Activated CD8-positive, alpha-beta T cell treated with anti-CD3 and anti-CD28 coated beads for 36 hours (primary cell): ENCODE measurements at regions of chr21 and their contacts with region 1.

Region 1: GRCh38 chr21:37711836-37712568 is 204.3 kb downstream of the KCNJ6 start:
- DNase-seq: peak; percentile 75
- ATAC-seq: peak; percentile 58
- H3K4me3 Mint-ChIP-seq: no peak overlapping the region
- H3K27ac Mint-ChIP-seq: no peak overlapping the region
- H3K4me1 Mint-ChIP-seq: no peaks in the 10 kb centered on the region
- H3K27me3 Mint-ChIP-seq: peaks cover 23% of the 10 kb centered on the region
- CTCF ChIP-seq: peak; percentile 75

Region 2: GRCh38 chr21:37700641-37701202 is 11.3 kb before region 1 on chr21:
- CTCF ChIA-PET with region 1: interaction called, 10 read pairs
- POLR2A ChIA-PET with region 1: no interaction called
- intact Hi-C with region 1: no loop called
- DNase-seq: peak; percentile 7
- ATAC-seq: peak; percentile 86
- H3K4me3 Mint-ChIP-seq: no peak overlapping the region
- H3K27ac Mint-ChIP-seq: no peak overlapping the region
- H3K4me1 Mint-ChIP-seq: no peaks in the 10 kb centered on the region
- H3K27me3 Mint-ChIP-seq: peaks cover 12% of the 10 kb centered on the region
- CTCF ChIP-seq: peak; percentile 63

Region 3: DNA sequence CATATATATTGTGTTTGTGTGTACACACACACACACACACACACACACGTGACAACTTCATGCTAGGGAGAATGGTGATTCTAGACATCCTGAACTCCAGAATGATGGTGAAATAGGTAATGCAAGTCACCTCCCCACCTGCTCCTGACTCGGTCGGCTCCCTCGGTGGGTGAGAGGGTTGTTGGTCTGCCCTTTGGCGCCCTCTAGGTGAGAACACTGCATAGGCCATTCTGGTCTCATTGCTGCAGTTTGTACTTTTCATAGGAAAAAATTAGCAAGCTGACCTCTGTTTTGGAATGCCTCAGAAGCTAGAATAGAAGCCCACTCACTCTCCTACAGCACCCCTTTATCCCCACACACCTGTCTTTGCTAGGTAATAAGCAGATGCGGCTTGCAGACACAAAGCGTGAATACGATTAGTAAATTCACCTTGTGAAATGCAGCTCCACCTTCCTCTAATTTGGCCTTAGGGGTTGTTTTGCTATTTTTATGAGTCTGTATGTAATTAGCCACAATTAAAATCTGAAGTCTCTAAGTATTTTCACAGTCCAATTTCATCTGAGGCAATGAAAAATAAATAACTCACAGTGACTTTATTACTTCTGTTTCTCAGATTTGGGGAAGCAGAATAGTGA is 414.8 kb after region 1 on chr21:
- CTCF ChIA-PET with region 1: interaction called, 5 read pairs
- POLR2A ChIA-PET with region 1: no interaction called
- intact Hi-C with region 1: loop called (anchors 10 kb)
- DNase-seq: peak; percentile 76
- ATAC-seq: peak; percentile 58
- H3K4me3 Mint-ChIP-seq: no peak overlapping the region
- H3K27ac Mint-ChIP-seq: no peak overlapping the region
- H3K4me1 Mint-ChIP-seq: no peaks in the 10 kb centered on the region
- H3K27me3 Mint-ChIP-seq: peaks cover 12% of the 10 kb centered on the region
- CTCF ChIP-seq: peak; percentile 64